GM12878 (cell line): ENCODE measurements at regions of chr19 and their contacts with region 1.

Region 1: GRCh38 chr19:42529248-42529764 is 1.0 kb upstream of the CEACAM1 start:
- DNase-seq: no peak
- ATAC-seq: peak; percentile 94
- H3K4me3 ChIP-seq: peak overlapping the region; percentile 20; the same call in 1 of the 2 replicates
- H3K27ac ChIP-seq: peak overlapping the region; percentile 74
- H3K4me1 ChIP-seq: peaks cover 15% of the 10 kb centered on the region
- H3K27me3 ChIP-seq: no peaks in the 10 kb centered on the region
- CTCF ChIP-seq: peak; percentile 97 to 98 (median 97); a peak in 5 of 6 replicates
- EP300 ChIP-seq: no peak
- POLR2A ChIP-seq: 0 out of 2 replicates have a peak, but pooled peaks have one; percentile 25
- RAD21 ChIP-seq: peak; percentile 98

Region 2: DNA sequence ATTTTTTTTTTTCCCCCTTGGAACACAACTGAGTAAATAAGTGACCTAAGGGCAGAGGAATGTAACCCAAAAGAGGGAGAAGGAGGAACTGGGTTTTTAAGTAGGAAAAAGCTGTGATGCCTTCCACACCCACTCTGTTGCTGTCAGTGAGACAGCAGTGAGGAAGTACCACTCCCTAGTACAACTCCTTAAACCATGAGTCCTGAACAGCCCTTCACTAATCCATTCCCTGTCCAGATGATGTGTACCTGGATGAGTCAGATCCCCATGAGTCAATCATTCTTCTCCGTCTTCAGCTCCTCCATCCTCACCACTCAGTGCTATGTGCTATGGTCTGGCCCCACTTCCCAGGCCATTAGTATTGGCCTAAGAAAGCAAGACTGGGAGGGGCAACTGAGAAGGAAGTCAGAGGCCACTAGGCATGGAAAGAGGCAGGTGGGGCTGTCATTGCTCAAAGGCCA is 73.7 kb before region 1 on chr19:
- CTCF ChIA-PET with region 1: interaction called, 250 read pairs
- POLR2A ChIA-PET with region 1: interaction called, 14 read pairs
- RAD21 ChIA-PET with region 1: interaction called, 177 read pairs
- SMC1A ChIA-PET with region 1: interaction called, 193 read pairs
- in situ Hi-C with region 1: loop called (anchors 5 kb)
- intact Hi-C with region 1: loop called (anchors 1 kb)
- DNase-seq: no peak
- ATAC-seq: no peak
- H3K4me3 ChIP-seq: no peak overlapping the region
- H3K27ac ChIP-seq: no peak overlapping the region
- H3K4me1 ChIP-seq: no peaks in the 10 kb centered on the region
- H3K27me3 ChIP-seq: no peaks in the 10 kb centered on the region
- CTCF ChIP-seq: no peak
- EP300 ChIP-seq: no peak
- POLR2A ChIP-seq: no peak
- RAD21 ChIP-seq: no peak

Region 3: DNA sequence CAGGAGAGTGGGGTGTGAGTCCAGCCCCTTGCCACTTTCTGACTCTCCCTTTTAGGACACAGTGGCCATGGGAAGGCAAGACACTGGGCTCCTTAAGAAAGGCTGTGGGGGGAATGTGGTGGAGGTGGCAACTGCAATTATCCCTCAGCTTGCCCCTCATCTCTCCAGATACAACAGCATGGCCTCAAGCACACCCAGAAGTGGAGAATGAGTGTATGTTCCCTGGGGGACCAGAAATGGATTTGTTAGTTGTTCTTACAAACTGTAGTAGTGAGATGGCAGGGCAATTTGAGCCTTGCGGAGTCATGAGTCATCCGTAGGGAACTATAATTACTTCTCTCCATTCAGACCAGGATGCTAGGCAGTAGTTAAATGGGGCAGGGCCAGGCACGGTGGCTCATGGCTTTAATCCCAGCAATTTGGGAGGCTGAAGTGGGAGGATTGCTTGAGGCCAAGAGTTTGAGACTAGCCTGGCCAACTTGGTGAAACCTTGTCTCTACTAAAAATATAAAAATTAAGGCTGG is 61.0 kb before region 1 on chr19:
- CTCF ChIA-PET with region 1: interaction called, 116 read pairs
- POLR2A ChIA-PET with region 1: interaction called, 32 read pairs
- RAD21 ChIA-PET with region 1: interaction called, 135 read pairs
- SMC1A ChIA-PET with region 1: interaction called, 127 read pairs
- in situ Hi-C with region 1: no loop called
- intact Hi-C with region 1: loop called (anchors 1 kb)
- DNase-seq: no peak
- ATAC-seq: no peak
- H3K4me3 ChIP-seq: no peak overlapping the region
- H3K27ac ChIP-seq: no peak overlapping the region
- H3K4me1 ChIP-seq: peaks cover 30% of the 10 kb centered on the region
- H3K27me3 ChIP-seq: no peaks in the 10 kb centered on the region
- CTCF ChIP-seq: no peak
- EP300 ChIP-seq: no peak
- POLR2A ChIP-seq: no peak
- RAD21 ChIP-seq: no peak

Region 4: DNA sequence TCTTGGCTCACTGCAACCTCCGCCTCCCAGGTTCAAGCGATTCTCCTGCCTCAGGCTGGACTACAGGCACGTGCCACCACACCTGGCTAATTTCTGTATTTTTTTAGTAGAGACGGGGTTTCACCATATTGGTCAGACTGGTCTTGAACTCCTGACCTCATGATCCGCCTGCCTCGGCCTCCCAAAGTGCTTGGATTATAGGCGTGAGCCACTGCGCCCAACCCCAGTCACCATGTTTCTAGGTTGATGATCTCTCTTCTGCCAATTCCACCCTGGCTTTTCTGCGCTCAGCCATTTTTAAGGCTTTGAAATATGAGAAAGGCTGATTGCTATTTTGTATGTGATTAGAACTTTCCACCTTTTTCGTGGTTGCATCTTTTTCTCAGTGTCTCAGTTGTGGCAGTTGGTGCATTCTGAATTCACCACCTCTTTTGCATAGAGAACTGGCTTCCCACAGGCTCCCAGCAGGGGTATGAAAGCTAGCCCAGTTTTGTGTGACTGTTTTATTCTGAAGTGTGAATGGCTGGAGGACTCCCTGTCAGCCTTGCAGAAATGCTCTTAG is 16.5 kb before region 1 on chr19:
- CTCF ChIA-PET with region 1: interaction called, 51 read pairs
- POLR2A ChIA-PET with region 1: interaction called, 16 read pairs
- RAD21 ChIA-PET with region 1: interaction called, 39 read pairs
- SMC1A ChIA-PET with region 1: interaction called, 53 read pairs
- in situ Hi-C with region 1: no loop called
- intact Hi-C with region 1: no loop called
- DNase-seq: peak; percentile 71
- ATAC-seq: peak; percentile 96
- H3K4me3 ChIP-seq: no peak overlapping the region
- H3K27ac ChIP-seq: peak overlapping the region; percentile 71
- H3K4me1 ChIP-seq: peaks cover 52% of the 10 kb centered on the region
- H3K27me3 ChIP-seq: no peaks in the 10 kb centered on the region
- CTCF ChIP-seq: 0 out of 6 replicates have a peak, but pooled peaks of 1 of the 3 experiments have one; percentile 11
- EP300 ChIP-seq: peak; percentile 26 to 68
- POLR2A ChIP-seq: no peak
- RAD21 ChIP-seq: no peak